Posterior vena cava (tissue), 2 donors: ENCODE measurements at regions of chr18 and their contacts with region 1.

Region 1: GRCh38 chr18:32777049-32777448 is 4.2 kb upstream of the KLHL14 start:
- DNase-seq: no peak

Region 2: DNA sequence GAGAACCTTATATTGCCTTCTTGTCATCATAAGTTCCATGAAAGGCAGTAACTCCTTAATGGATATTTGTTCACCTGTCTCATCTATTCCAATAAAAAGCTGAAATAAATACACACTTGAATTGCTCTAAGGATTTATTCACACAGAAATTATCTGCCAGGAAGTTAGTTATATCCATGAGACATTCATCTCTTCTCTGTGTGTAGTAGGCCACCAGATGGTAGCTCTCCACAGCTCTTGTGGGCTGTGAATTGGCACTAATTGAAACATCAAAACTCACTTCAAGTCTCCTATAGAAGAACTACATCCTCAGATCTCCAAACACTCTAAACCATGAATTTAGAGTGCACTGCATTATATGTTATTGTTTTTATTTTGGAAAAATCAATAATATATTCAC is 1924.1 kb before region 1 on chr18:
- intact Hi-C with region 1: loop called in 1 of 2 experiments (anchors 5 kb)
- DNase-seq: no peak